ENCODE measurements at regions of chr19 and their contacts with region 1.

Region 1: DNA sequence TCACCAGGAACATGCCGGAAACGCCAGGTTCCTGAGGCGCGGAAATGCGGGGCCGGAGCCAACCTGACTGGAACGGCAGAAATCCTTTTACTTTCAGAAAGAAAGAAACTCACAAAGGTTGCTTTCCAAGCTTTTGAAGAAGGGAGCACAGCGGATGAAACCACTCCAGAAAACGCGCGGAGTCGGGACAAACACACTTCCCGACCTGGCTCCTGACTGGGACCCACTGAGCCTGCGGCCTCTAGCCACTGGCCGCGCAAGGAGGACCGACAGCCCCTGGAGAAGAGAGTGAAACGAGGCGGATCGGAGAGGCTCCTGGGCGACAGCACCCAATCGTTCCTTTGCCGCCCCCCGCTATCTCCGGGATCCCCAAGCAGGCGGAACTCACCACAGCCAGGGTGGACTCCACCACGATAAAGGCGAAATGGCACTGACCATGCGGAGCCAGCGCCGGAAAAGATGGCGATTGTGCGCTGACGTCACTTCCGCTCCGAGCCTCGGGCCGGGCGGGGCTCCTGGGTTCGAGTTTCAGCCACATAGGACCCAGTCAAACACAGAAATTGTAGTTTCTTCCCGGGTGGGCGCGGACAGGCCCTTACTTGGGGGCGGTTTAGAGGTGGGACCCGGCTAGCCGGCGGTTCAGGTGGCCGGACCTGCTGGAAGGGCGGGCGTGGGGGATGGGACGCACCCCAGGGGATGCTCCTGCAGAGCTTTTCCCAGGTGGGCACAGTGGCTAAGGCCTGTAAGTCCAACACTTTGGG is at the start of gene ZNF121:
- DNase-seq: peak; percentile 77
- H3K4me3 ChIP-seq: peak within 1 kb of the TSS; percentile 90 to 100 (median 97)
- H3K27ac ChIP-seq: peak within 1 kb of the TSS; percentile 94
- H3K4me1 ChIP-seq: no peaks in the 10 kb centered on the region
- H3K27me3 ChIP-seq: no peaks in the 10 kb centered on the region
- CTCF ChIP-seq: no peak
- total RNA-seq, gene ZNF121: 62.4 to 70.5 TPM

Region 2: DNA sequence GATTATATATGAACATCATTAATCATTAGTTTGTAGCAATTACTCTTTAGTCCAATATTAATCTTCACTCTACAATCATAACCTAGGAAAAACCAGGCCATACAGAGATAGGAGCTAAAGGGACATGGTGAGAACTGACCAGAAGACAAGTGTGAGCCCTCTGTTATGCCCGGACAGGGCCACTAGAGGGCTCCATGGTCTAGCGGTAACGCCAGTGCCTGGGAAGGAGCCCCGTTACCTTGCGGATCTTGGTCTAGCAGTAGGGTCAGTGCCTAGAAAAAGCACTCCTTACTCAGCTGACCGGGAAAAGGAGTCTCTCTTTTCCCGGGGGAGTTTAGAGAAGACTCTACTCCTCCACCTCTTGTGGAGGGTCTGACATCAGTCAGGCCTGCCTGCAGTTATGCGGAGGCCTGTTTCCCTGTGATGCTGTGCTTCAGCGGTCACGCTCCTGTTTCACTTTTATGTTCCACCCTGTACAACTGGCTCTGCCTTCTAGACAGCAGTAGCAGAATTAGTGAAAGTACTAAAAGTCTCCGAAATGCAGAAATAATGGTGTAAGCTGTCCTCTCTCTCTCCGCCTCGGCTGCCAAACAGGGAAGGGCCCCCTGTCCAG is 378.6 kb before region 1 on chr19:
- CTCF ChIA-PET with region 1: no interaction called
- dilution Hi-C with region 1: no loop called
- in situ Hi-C with region 1: no loop called
- intact Hi-C with region 1: loop called (anchors 5 kb)
- DNase-seq: peak; percentile 53
- H3K4me3 ChIP-seq: peak overlapping the region; percentile 21 to 33 (median 27)
- H3K27ac ChIP-seq: no peak overlapping the region
- H3K4me1 ChIP-seq: no peaks in the 10 kb centered on the region
- H3K27me3 ChIP-seq: no peaks in the 10 kb centered on the region
- CTCF ChIP-seq: peak; percentile 71 to 89

Region 3: GRCh38 chr19:9435279-9436268 is 148.7 kb before region 1 on chr19 and contains the start of gene ZNF266:
- CTCF ChIA-PET with region 1: no interaction called
- dilution Hi-C with region 1: no loop called
- in situ Hi-C with region 1: no loop called
- intact Hi-C with region 1: loop called (anchors 1 kb)
- DNase-seq: peak; percentile 87
- H3K4me3 ChIP-seq: peak within 1 kb of the TSS; percentile 70 to 95 (median 84)
- H3K27ac ChIP-seq: peak within 1 kb of the TSS; percentile 78
- H3K4me1 ChIP-seq: no peaks in the 10 kb centered on the region
- H3K27me3 ChIP-seq: no peaks in the 10 kb centered on the region
- CTCF ChIP-seq: peak; percentile 53 to 74
- total RNA-seq, gene ZNF266: 10.5 to 14.2 TPM

Region 4: DNA sequence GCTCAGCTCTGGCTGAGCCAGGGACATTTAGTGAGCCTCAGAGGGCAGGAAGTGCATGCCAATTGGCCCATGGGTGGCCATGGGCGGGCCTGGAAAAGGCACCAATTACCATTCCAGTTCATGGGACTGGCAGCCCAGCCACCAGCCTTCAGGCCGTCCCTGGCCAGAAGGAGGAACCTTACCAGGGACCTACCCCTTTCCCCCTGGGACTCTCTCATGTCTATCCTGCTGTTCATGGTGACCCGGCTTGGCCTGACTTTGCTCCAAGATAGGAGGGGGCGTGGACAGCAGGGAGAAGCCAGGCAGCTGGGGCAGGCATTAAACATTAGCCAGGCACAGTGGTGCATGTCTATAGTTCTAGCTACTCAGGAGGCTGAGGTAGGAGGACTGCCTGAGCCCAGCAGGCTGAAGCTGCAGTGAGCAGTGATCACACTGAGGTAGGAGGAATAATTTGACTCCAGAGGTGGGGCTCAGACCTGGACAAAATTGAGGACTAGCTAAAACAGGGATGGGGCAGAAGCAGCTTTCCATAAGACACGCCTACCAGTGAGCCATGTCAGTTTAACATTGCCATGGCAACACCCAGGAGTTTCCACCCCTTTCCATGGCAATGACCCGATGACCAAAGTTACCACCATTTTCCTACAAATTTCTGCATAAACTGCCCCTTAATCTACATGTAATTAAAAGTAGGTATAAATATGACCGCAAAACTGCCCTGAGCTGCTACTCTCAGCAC is 31.5 kb before region 1 on chr19:
- CTCF ChIA-PET with region 1: no interaction called
- dilution Hi-C with region 1: no loop called
- in situ Hi-C with region 1: no loop called
- intact Hi-C with region 1: no loop called
- DNase-seq: no peak
- H3K4me3 ChIP-seq: no peak overlapping the region
- H3K27ac ChIP-seq: no peak overlapping the region
- H3K4me1 ChIP-seq: no peaks in the 10 kb centered on the region
- H3K27me3 ChIP-seq: no peaks in the 10 kb centered on the region
- CTCF ChIP-seq: no peak

Region 5: DNA sequence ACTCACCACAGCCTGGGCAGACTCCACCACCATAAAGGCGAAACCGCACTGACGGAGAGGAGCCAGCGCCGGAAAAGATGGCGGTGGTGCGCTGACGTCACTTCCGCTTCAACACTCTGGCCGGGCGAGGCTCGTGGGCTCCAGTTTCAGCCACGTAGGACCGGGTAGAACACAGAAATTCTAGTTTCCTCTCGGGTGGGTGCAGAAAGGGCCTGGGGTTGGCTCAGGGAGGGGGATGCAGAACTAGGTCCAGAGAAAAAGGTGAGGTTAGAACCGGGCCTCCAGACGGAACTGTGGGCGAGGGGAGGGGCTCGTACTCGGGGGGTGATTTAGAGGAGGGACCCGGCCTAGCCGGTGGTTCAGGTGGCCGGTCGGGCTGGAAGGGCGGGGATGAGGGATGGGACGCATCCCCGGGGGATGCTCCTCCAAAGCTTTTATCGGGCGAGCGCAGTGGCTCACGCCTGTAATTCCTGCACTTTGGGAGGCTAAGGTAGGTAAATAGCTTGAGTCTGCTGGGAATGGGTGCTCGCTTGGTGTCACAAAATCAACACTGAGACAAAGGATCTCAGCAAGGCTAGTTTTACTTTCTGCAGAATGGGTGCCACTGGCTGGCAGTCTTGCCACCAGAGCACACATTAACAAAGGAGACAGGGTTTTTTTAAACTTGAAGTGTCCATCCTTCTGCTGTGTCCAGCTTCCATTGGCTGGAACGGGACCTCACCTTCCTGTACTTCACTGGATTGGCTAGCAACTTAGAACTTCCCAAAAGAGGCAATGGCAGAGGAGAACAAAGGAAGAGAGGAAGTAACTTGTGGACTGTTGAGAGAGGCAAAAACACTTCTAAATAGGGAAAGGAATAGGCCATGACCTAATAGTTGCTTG is 37.1 kb after region 1 on chr19 and contains the start of gene ZNF561:
- CTCF ChIA-PET with region 1: no interaction called
- dilution Hi-C with region 1: no loop called
- in situ Hi-C with region 1: no loop called
- intact Hi-C with region 1: loop called (anchors 1 kb)
- DNase-seq: peak; percentile 90
- H3K4me3 ChIP-seq: peak within 1 kb of the TSS; percentile 81 to 93 (median 86)
- H3K27ac ChIP-seq: peak within 1 kb of the TSS; percentile 77
- H3K4me1 ChIP-seq: peaks cover 21% of the 10 kb centered on the region
- H3K27me3 ChIP-seq: no peaks in the 10 kb centered on the region
- CTCF ChIP-seq: no peak
- total RNA-seq, gene ZNF561: 62.6 to 78.3 TPM

Region 6: GRCh38 chr19:9667898-9668297 is 83.6 kb after region 1 on chr19:
- CTCF ChIA-PET with region 1: no interaction called
- dilution Hi-C with region 1: no loop called
- in situ Hi-C with region 1: no loop called
- intact Hi-C with region 1: loop called (anchors 10 kb)
- DNase-seq: no peak
- H3K4me3 ChIP-seq: no peak overlapping the region
- H3K27ac ChIP-seq: no peak overlapping the region
- H3K4me1 ChIP-seq: no peaks in the 10 kb centered on the region
- H3K27me3 ChIP-seq: no peaks in the 10 kb centered on the region
- CTCF ChIP-seq: no peak

Region 7: GRCh38 chr19:9796113-9796773 is 212.0 kb after region 1 on chr19:
- CTCF ChIA-PET with region 1: interaction called, 16 read pairs
- dilution Hi-C with region 1: no loop called
- in situ Hi-C with region 1: loop called in 1 of 2 experiments (anchors 5 kb)
- intact Hi-C with region 1: loop called (anchors 1 kb)
- DNase-seq: peak; percentile 86
- H3K4me3 ChIP-seq: no peak overlapping the region
- H3K27ac ChIP-seq: peak overlapping the region; percentile 49
- H3K4me1 ChIP-seq: peaks cover 12% of the 10 kb centered on the region
- H3K27me3 ChIP-seq: no peaks in the 10 kb centered on the region
- CTCF ChIP-seq: peak; percentile 78 to 89